ENCODE measurements at regions of chr7 and their contacts with region 1.

Region 1: DNA sequence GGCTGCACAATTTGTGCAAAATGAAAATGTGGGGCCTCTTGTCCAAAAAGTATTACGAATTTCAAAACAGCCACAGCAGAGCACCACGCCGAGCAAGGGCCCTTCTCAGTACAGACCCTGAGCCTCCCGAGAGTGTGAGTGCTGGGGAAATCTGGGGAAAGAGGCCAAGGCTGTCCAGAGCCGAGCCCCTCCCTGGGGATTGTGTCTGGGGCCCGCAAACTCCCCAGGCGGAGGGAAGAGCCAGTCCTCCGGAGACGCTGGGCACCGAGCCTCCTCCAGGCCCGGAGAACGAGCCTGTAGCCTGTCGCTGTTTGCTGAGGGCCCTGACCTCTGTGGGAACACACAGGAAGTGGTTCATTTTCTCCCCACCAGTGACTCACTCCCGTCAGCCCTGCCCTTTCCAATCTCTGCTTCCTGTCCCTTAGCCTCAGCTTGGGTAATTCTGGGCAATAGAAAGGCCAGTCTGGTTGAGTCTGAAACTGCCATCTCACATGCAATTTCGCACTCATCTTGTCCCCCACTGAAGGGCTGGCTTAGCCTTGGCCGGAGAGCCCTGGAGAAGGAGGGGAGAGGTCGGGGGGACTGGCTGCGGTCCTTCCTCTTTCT is 19.5 kb upstream of the GNA12 start:
- DNase-seq: peak; percentile 76 to 95
- H3K4me3 ChIP-seq: peak overlapping the region in 1 of 2 donors; percentile 50
- H3K27ac ChIP-seq: peak overlapping the region; percentile 89 to 98
- H3K4me1 ChIP-seq: peaks cover 15 to 29% of the 10 kb centered on the region in 2 donors
- H3K27me3 ChIP-seq: no peaks in the 10 kb centered on the region
- CTCF ChIP-seq: no peak

Region 2: GRCh38 chr7:2757904-2758672 is 105.5 kb before region 1 on chr7:
- intact Hi-C with region 1: loop called (anchors 5 kb)
- DNase-seq: peak in 1 of 2 donors; percentile 83
- H3K4me3 ChIP-seq: peak overlapping the region in 1 of 2 donors; percentile 31
- H3K27ac ChIP-seq: peak overlapping the region; percentile 79 to 80
- H3K4me1 ChIP-seq: peaks cover 29 to 40% of the 10 kb centered on the region in 2 donors
- H3K27me3 ChIP-seq: no peaks in the 10 kb centered on the region
- CTCF ChIP-seq: no peak

Region 3: GRCh38 chr7:3218411-3219225 is 355.1 kb after region 1 on chr7:
- intact Hi-C with region 1: loop called (anchors 2 kb)
- DNase-seq: no peak
- H3K4me3 ChIP-seq: peak overlapping the region; percentile 11 to 23
- H3K27ac ChIP-seq: peak overlapping the region; percentile 67 to 72
- H3K4me1 ChIP-seq: peaks cover 12 to 42% of the 10 kb centered on the region in 2 donors
- H3K27me3 ChIP-seq: no peaks in the 10 kb centered on the region
- CTCF ChIP-seq: no peak

Region 4: GRCh38 chr7:3897438-3898385 is 1034.1 kb after region 1 on chr7:
- intact Hi-C with region 1: loop called (anchors 2 kb)
- DNase-seq: no peak
- H3K4me3 ChIP-seq: no peak overlapping the region
- H3K27ac ChIP-seq: no peak overlapping the region
- H3K4me1 ChIP-seq: peaks cover 0 to 3% of the 10 kb centered on the region in 2 donors
- H3K27me3 ChIP-seq: no peaks in the 10 kb centered on the region
- CTCF ChIP-seq: peak; percentile 59 to 69 (median 62)

Measured in ascending aorta (tissue), 2 donors.